Thyroid gland (tissue), 4 donors: ENCODE measurements at regions of chr14 and their contacts with region 1.

Region 1: GRCh38 chr14:52473557-52473956 is 78.7 kb downstream of the TXNDC16 start:
- DNase-seq: no peak
- H3K4me3 ChIP-seq: no peak overlapping the region
- H3K27ac ChIP-seq: no peak overlapping the region
- H3K4me1 ChIP-seq: no peaks in the 10 kb centered on the region
- H3K27me3 ChIP-seq: no peaks in the 10 kb centered on the region
- CTCF ChIP-seq: peak in 3 of 6 experiments; percentile 28 to 33 (median 31)
- POLR2A ChIP-seq: no peak

Region 2: GRCh38 chr14:52299692-52300278 is 173.8 kb before region 1 on chr14:
- intact Hi-C with region 1: loop called (anchors 10 kb)
- DNase-seq: no peak
- H3K4me3 ChIP-seq: no peak overlapping the region
- H3K27ac ChIP-seq: no peak overlapping the region
- H3K4me1 ChIP-seq: no peaks in the 10 kb centered on the region
- H3K27me3 ChIP-seq: no peaks in the 10 kb centered on the region
- CTCF ChIP-seq: peak in 5 of 6 experiments; percentile 42 to 65 (median 55)
- POLR2A ChIP-seq: no peak

Region 3: DNA sequence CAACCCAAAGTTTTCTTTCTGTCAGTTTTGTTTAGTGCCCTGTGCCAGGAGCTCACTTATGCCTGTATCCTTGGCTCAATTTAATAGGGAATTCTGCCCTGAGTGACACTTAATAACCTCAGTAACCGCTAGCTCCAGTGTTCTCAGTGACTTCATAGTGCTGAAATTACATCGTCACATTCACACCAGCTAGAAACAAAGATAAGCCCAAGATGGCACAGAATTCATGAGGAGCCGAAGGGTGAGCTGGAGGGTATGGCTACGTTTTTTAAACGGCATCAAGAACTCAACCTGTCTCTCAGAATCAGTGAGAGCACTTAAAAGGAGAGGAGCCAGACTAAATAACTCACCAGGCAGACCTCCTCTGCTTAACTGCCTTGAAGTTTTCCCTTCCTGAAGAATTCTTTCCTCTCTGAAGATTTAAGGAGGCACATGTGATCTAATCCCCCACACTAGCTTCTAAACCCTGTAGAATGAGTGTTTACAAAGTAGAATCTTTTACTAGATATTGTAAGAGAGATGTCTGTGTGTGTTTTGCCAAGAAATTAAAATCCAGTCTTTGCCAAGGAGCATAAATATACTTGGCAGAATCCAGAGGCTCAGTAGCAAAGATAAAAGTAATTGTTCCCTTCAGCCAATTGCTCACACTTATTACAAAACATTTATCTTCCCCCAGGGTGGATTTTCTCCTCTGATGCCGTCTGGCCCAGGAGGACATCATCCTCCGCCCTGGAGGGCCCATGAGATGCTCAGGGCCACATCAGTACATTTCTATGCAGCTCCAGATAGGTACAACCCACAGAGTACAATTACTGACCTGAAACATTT is 122.1 kb before region 1 on chr14:
- intact Hi-C with region 1: no loop called
- DNase-seq: no peak
- H3K4me3 ChIP-seq: no peak overlapping the region
- H3K27ac ChIP-seq: no peak overlapping the region
- H3K4me1 ChIP-seq: no peaks in the 10 kb centered on the region
- H3K27me3 ChIP-seq: no peaks in the 10 kb centered on the region
- CTCF ChIP-seq: no peak
- POLR2A ChIP-seq: no peak